Right lobe of liver (tissue), 6 donors: ENCODE measurements at regions of chr5 and their contacts with region 1.

Region 1: GRCh38 chr5:53481887-53482716 is 1.7 kb downstream of the FST start:
- DNase-seq: peak; percentile 87 to 91 (median 90)
- ATAC-seq: peak; percentile 44 to 65 (median 52)
- H3K4me3 ChIP-seq: peak overlapping the region; percentile 68 to 75 (median 72)
- H3K27ac ChIP-seq: peak overlapping the region; percentile 37 to 98 (median 95)
- H3K4me1 ChIP-seq: peaks cover 0 to 28% (median 12%) of the 10 kb centered on the region in 4 donors
- H3K27me3 ChIP-seq: no peaks in the 10 kb centered on the region
- CTCF ChIP-seq: peak in 2 of 4 donors; percentile 16 to 39
- POLR2A ChIP-seq: peak; percentile 87

Region 2: GRCh38 chr5:54229041-54229780 is 747.1 kb after region 1 on chr5:
- intact Hi-C with region 1: loop called in 1 of 2 experiments (anchors 5 kb)
- DNase-seq: peak; percentile 72 to 77 (median 73)
- ATAC-seq: peak; percentile 91 to 97 (median 95)
- H3K4me3 ChIP-seq: no peak overlapping the region
- H3K27ac ChIP-seq: no peak overlapping the region
- H3K4me1 ChIP-seq: no peaks in the 10 kb centered on the region
- H3K27me3 ChIP-seq: no peaks in the 10 kb centered on the region
- CTCF ChIP-seq: peak; percentile 88 to 95 (median 94)
- POLR2A ChIP-seq: no peak